ENCODE measurements at regions of chr15 and their contacts with region 1.

Region 1: GRCh38 chr15:89112341-89112971 is 24.2 kb downstream of the ABHD2 start:
- DNase-seq: no peak
- H3K4me3 Mint-ChIP-seq: no peak overlapping the region
- H3K27ac Mint-ChIP-seq: no peak overlapping the region
- H3K4me1 Mint-ChIP-seq: peaks cover 22% of the 10 kb centered on the region
- H3K27me3 Mint-ChIP-seq: no peaks in the 10 kb centered on the region

Region 2: GRCh38 chr15:88904624-88905327 is 207.7 kb before region 1 on chr15:
- intact Hi-C with region 1: no loop called
- DNase-seq: peak; percentile 86
- H3K4me3 Mint-ChIP-seq: no peak overlapping the region
- H3K27ac Mint-ChIP-seq: peak overlapping the region; percentile 19
- H3K4me1 Mint-ChIP-seq: peaks cover 22% of the 10 kb centered on the region
- H3K27me3 Mint-ChIP-seq: no peaks in the 10 kb centered on the region

Region 3: GRCh38 chr15:89096664-89097063 is 15.8 kb before region 1 on chr15:
- intact Hi-C with region 1: loop called (anchors 2 kb)
- DNase-seq: no peak
- H3K4me3 Mint-ChIP-seq: no peak overlapping the region
- H3K27ac Mint-ChIP-seq: no peak overlapping the region
- H3K4me1 Mint-ChIP-seq: peaks cover 25% of the 10 kb centered on the region
- H3K27me3 Mint-ChIP-seq: no peaks in the 10 kb centered on the region